WTC11 (cell line): ENCODE measurements at regions of chr4 and their contacts with region 1.

Region 1: GRCh38 chr4:26330186-26330787 is 9.5 kb downstream of the RBPJ start:
- DNase-seq: no peak
- ATAC-seq: peak; percentile 61
- H3K4me3 Mint-ChIP-seq: peak overlapping the region; percentile 59
- H3K27ac Mint-ChIP-seq: peak overlapping the region; percentile 96
- H3K4me1 Mint-ChIP-seq: peaks cover 62% of the 10 kb centered on the region
- H3K27me3 Mint-ChIP-seq: no peaks in the 10 kb centered on the region
- CTCF ChIP-seq: peak; percentile 69

Region 2: GRCh38 chr4:26161030-26161824 is 169.1 kb before region 1 on chr4:
- CTCF ChIA-PET with region 1: interaction called, 10 read pairs
- POLR2A ChIA-PET with region 1: no interaction called
- DNase-seq: peak; percentile 33
- ATAC-seq: peak; percentile 94
- H3K4me3 Mint-ChIP-seq: no peak overlapping the region
- H3K27ac Mint-ChIP-seq: no peak overlapping the region
- H3K4me1 Mint-ChIP-seq: peaks cover 16% of the 10 kb centered on the region
- H3K27me3 Mint-ChIP-seq: no peaks in the 10 kb centered on the region
- CTCF ChIP-seq: no peak

Region 3: DNA sequence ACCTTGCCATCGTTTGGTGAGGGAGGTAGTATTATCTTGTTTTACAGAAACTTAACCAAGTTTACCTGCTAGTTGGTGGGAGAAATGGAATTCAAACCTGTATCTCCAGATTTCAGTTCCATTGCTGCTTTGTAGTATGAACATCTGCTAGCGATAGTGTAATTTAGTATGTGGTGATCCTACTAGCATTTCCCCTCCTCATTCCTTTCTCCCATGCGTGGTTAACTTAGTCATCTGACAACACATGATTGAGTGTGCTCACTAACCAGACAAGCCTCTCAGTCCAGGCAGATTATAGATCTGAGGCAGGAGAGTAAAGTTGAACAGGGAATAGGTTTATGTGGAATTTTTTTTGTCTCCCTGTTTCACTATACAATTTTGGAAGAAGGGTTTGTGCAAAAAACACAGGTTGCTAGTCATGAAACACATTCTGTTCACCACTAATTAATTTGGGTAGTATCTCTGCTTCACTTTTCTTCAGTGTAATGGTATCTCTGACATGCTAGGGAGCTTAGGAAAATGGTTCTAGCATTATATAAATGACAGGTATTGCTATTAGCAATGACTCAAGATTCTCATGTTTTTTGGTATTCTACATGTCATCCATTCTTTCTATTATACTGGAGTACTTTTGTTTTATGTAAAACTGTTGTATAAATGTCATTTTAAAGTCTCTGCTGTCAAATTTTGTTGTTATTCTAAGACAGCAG is 12.2 kb after region 1 on chr4:
- CTCF ChIA-PET with region 1: interaction called, 32 read pairs
- POLR2A ChIA-PET with region 1: no interaction called
- DNase-seq: no peak
- ATAC-seq: no peak
- H3K4me3 Mint-ChIP-seq: no peak overlapping the region
- H3K27ac Mint-ChIP-seq: peak overlapping the region; percentile 83
- H3K4me1 Mint-ChIP-seq: peaks cover 66% of the 10 kb centered on the region
- H3K27me3 Mint-ChIP-seq: no peaks in the 10 kb centered on the region
- CTCF ChIP-seq: no peak

Region 4: DNA sequence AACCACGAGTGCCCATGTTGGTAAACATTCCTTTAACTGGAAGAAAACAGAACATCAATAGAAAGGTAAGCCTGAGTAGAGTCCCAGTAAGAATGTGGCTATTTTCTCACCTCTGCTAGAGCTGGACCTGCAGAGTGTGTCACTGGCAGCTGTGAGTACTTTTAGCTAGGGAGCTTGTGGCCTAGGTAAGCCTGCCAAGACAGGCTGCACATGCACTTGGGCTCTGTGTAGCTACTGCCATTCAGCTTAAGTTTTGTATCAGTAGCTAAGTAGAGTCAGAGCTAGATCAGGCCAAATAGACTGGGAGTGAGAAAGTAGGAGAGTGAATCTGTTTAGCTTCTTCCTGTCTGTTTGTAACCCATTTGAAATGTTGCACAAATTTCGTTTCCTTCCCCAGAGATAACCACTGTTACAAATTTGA is 25.8 kb after region 1 on chr4:
- CTCF ChIA-PET with region 1: interaction called, 13 read pairs
- POLR2A ChIA-PET with region 1: no interaction called
- DNase-seq: no peak
- ATAC-seq: no peak; the same call in 1 of the 2 replicates
- H3K4me3 Mint-ChIP-seq: no peak overlapping the region
- H3K27ac Mint-ChIP-seq: no peak overlapping the region
- H3K4me1 Mint-ChIP-seq: peaks cover 41% of the 10 kb centered on the region
- H3K27me3 Mint-ChIP-seq: no peaks in the 10 kb centered on the region
- CTCF ChIP-seq: no peak

Region 5: GRCh38 chr4:26397086-26397485 is 66.8 kb after region 1 on chr4:
- CTCF ChIA-PET with region 1: interaction called, 11 read pairs
- POLR2A ChIA-PET with region 1: no interaction called
- DNase-seq: no peak
- ATAC-seq: no peak
- H3K4me3 Mint-ChIP-seq: no peak overlapping the region
- H3K27ac Mint-ChIP-seq: peak overlapping the region; percentile 82
- H3K4me1 Mint-ChIP-seq: peaks cover 63% of the 10 kb centered on the region
- H3K27me3 Mint-ChIP-seq: no peaks in the 10 kb centered on the region
- CTCF ChIP-seq: no peak

Region 6: GRCh38 chr4:26420438-26420837 is 90.2 kb after region 1 on chr4:
- CTCF ChIA-PET with region 1: interaction called, 13 read pairs
- POLR2A ChIA-PET with region 1: no interaction called
- DNase-seq: no peak
- ATAC-seq: no peak
- H3K4me3 Mint-ChIP-seq: no peak overlapping the region
- H3K27ac Mint-ChIP-seq: peak overlapping the region; percentile 23; the same call in 1 of the 2 replicates
- H3K4me1 Mint-ChIP-seq: peaks cover 50% of the 10 kb centered on the region
- H3K27me3 Mint-ChIP-seq: no peaks in the 10 kb centered on the region
- CTCF ChIP-seq: no peak